Naive thymus-derived CD4-positive, alpha-beta T cell (primary cell): ENCODE measurements at regions of chr3 and their contacts with region 1.

Region 1: GRCh38 chr3:111989061-111989678 is 9.6 kb upstream of the TAGLN3 start:
- DNase-seq: peak in 3 of 9 donors; percentile 21 to 32 (median 32)
- ATAC-seq: peak; percentile 87
- H3K4me3 ChIP-seq: no peak overlapping the region
- H3K4me3 Mint-ChIP-seq: no peak overlapping the region
- H3K27ac ChIP-seq: no peak overlapping the region
- H3K27ac Mint-ChIP-seq: peak overlapping the region in 1 of 9 donors; percentile 30
- H3K4me1 ChIP-seq: no peaks in the 10 kb centered on the region
- H3K4me1 Mint-ChIP-seq: peaks cover 11 to 44% (median 35%) of the 10 kb centered on the region in 7 donors
- H3K27me3 ChIP-seq: no peaks in the 10 kb centered on the region
- H3K27me3 Mint-ChIP-seq: no peaks in the 10 kb centered on the region

Region 2: GRCh38 chr3:111936191-111936841 is 52.9 kb before region 1 on chr3:
- CTCF ChIA-PET with region 1: no interaction called
- POLR2A ChIA-PET with region 1: no interaction called
- intact Hi-C with region 1: no loop called
- DNase-seq: no peak
- ATAC-seq: no peak
- H3K4me3 ChIP-seq: no peak overlapping the region
- H3K4me3 Mint-ChIP-seq: no peak overlapping the region
- H3K27ac ChIP-seq: no peak overlapping the region
- H3K27ac Mint-ChIP-seq: no peak overlapping the region
- H3K4me1 ChIP-seq: no peaks in the 10 kb centered on the region
- H3K4me1 Mint-ChIP-seq: no peaks in the 10 kb centered on the region
- H3K27me3 ChIP-seq: no peaks in the 10 kb centered on the region
- H3K27me3 Mint-ChIP-seq: peaks cover 0 to 9% (median 0%) of the 10 kb centered on the region in 5 donors

Region 3: GRCh38 chr3:112007633-112008032 is 18.5 kb after region 1 on chr3:
- CTCF ChIA-PET with region 1: interaction called, 59 read pairs
- POLR2A ChIA-PET with region 1: interaction called, 4 read pairs
- intact Hi-C with region 1: loop called in 1 of 2 experiments (anchors 1 kb)
- DNase-seq: no peak
- ATAC-seq: no peak
- H3K4me3 ChIP-seq: no peak overlapping the region
- H3K4me3 Mint-ChIP-seq: no peak overlapping the region
- H3K27ac ChIP-seq: no peak overlapping the region
- H3K27ac Mint-ChIP-seq: no peak overlapping the region
- H3K4me1 ChIP-seq: peaks cover 5 to 11% of the 10 kb centered on the region in 2 donors
- H3K4me1 Mint-ChIP-seq: peaks cover 14 to 29% (median 19%) of the 10 kb centered on the region in 7 donors
- H3K27me3 ChIP-seq: no peaks in the 10 kb centered on the region
- H3K27me3 Mint-ChIP-seq: no peaks in the 10 kb centered on the region

Region 4: GRCh38 chr3:112043603-112044201 is 54.5 kb after region 1 on chr3:
- CTCF ChIA-PET with region 1: interaction called, 8 read pairs
- POLR2A ChIA-PET with region 1: no interaction called
- intact Hi-C with region 1: loop called (anchors 1 kb)
- DNase-seq: peak in 8 of 9 donors; percentile 29 to 70 (median 58)
- ATAC-seq: peak; percentile 95
- H3K4me3 ChIP-seq: no peak overlapping the region
- H3K4me3 Mint-ChIP-seq: no peak overlapping the region
- H3K27ac ChIP-seq: no peak overlapping the region
- H3K27ac Mint-ChIP-seq: no peak overlapping the region
- H3K4me1 ChIP-seq: no peaks in the 10 kb centered on the region
- H3K4me1 Mint-ChIP-seq: no peaks in the 10 kb centered on the region
- H3K27me3 ChIP-seq: no peaks in the 10 kb centered on the region
- H3K27me3 Mint-ChIP-seq: peaks cover 0 to 3% (median 0%) of the 10 kb centered on the region in 5 donors